GM12878 (cell line): ENCODE measurements at regions of chr11 and their contacts with region 1.

Region 1: DNA sequence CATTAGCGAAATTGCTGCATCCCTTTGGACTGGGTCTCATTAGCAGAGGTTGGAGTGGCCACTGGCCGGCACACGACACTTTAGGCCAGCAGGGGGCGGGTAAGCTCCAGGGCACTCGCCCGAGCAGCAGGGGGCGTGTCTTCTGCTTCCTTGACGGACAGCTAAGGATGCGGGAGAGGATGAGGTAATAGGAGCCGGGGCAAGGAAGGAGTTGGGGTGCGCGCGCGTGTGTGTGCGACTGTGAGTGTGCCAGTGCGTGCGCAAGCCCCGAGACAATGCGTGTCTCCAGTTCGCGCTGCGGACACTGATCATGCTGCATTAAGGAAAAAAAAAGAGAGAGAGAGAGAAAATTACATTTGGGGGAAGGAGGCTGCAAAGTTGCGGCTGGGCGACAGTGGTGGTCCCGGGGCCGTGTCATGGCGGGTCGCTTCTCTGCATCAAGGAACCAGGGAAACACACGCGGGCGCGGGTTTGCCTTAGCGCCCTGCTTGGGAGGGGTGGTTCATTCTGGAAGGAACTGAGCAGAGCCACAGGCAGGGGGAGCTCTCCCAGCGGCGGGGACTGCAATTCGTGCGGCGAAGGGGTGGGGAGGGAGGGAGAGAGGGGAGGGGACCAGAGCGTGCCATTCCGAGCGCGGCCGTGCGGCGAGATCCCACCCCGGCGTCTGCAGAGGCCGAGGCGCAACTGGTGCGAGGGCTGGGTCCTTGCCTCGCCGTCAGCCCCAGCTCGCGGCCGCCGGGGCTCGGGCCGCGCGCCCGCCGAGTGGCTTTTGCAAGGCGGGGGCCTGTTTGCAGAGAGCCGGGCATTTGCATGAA is at the start of gene DTX4:
- DNase-seq: peak; percentile 57
- ATAC-seq: peak; percentile 76
- H3K4me3 ChIP-seq: peak within 1 kb of the TSS; percentile 93
- H3K27ac ChIP-seq: peak within 1 kb of the TSS; percentile 84
- H3K4me1 ChIP-seq: peaks cover 6% of the 10 kb centered on the region
- H3K27me3 ChIP-seq: no peaks in the 10 kb centered on the region
- CTCF ChIP-seq: peak; percentile 97 to 98 (median 97)
- EP300 ChIP-seq: no peak
- POLR2A ChIP-seq: 0 out of 2 replicates have a peak, but pooled peaks have one; percentile 69
- RAD21 ChIP-seq: peak; percentile 92
- polyA plus RNA-seq, gene DTX4: 5.9 to 6.9 TPM

Region 2: DNA sequence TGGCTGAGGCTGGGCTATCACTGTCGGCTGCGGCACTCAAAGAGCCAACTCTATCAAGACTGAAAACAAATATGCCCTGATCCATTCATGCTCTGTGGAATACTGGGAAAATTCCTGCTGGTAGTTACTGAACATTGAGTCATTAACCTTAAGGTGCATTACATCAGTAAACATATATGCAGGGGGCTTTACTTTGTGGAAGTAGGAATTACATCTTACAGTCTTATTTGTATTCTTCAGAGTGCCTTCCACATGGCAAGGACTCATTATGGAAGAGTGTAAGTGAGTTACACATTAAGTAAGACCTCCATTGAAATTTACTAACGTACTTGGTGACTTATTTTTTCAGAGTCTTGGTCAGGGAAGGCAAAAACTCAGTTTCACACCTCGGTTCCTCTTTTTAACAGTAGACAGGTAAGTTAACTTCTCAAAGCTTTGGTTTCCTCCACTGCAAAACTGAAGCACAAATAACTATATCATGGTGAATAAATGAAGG is 668.3 kb before region 1 on chr11:
- CTCF ChIA-PET with region 1: no interaction called
- POLR2A ChIA-PET with region 1: no interaction called
- RAD21 ChIA-PET with region 1: no interaction called
- SMC1A ChIA-PET with region 1: no interaction called
- in situ Hi-C with region 1: no loop called
- intact Hi-C with region 1: no loop called
- DNase-seq: peak; percentile 51
- ATAC-seq: peak; percentile 91
- H3K4me3 ChIP-seq: no peak overlapping the region
- H3K27ac ChIP-seq: no peak overlapping the region
- H3K4me1 ChIP-seq: peaks cover 6% of the 10 kb centered on the region; the same call in 1 of the 2 replicates
- H3K27me3 ChIP-seq: no peaks in the 10 kb centered on the region
- CTCF ChIP-seq: no peak
- EP300 ChIP-seq: peak in 1 of 2 experiments; percentile 84; a peak in 2 of 4 replicates
- POLR2A ChIP-seq: no peak
- RAD21 ChIP-seq: no peak

Region 3: GRCh38 chr11:59152312-59152951 is 19.3 kb before region 1 on chr11:
- CTCF ChIA-PET with region 1: interaction called, 59 read pairs
- POLR2A ChIA-PET with region 1: no interaction called
- RAD21 ChIA-PET with region 1: interaction called, 4 read pairs
- SMC1A ChIA-PET with region 1: interaction called, 8 read pairs
- in situ Hi-C with region 1: no loop called
- intact Hi-C with region 1: no loop called
- DNase-seq: no peak
- ATAC-seq: peak; percentile 91
- H3K4me3 ChIP-seq: peak overlapping the region; percentile 44; the same call in 1 of the 2 replicates
- H3K27ac ChIP-seq: peak overlapping the region; percentile 83
- H3K4me1 ChIP-seq: peaks cover 28% of the 10 kb centered on the region
- H3K27me3 ChIP-seq: no peaks in the 10 kb centered on the region
- CTCF ChIP-seq: no peak
- EP300 ChIP-seq: peak in 1 of 2 experiments; percentile 68; a peak in 1 of 4 replicates
- POLR2A ChIP-seq: 0 out of 2 replicates have a peak, but pooled peaks have one; percentile 6
- RAD21 ChIP-seq: no peak

Region 4: DNA sequence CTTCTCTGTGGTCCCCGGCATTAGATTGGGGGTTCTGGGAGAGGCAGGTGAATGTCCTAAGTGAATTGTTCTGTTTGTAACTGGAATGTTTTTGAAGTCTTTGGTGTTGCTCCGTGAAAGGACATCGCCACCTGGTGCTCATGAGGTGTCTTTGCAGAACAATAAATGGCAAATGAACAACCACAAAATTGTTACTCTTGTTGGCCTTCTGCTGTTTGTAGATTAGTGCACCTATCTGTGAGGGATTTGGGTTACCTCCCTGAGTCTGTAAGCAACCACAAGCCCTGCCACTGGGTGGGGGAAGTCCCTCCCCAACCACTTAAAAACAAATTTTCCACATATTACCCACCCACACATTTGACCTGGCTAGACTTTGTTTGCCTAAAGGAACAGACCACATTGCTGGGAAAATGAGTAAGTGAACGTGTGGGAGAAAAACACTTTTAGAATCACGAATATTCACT is 36.3 kb after region 1 on chr11:
- CTCF ChIA-PET with region 1: interaction called, 1,180 read pairs
- POLR2A ChIA-PET with region 1: interaction called, 19 read pairs
- RAD21 ChIA-PET with region 1: interaction called, 183 read pairs
- SMC1A ChIA-PET with region 1: interaction called, 155 read pairs
- in situ Hi-C with region 1: loop called (anchors 5 kb)
- intact Hi-C with region 1: loop called (anchors 1 kb)
- DNase-seq: peak; percentile 89
- ATAC-seq: peak; percentile 77
- H3K4me3 ChIP-seq: peak overlapping the region; percentile 64
- H3K27ac ChIP-seq: peak overlapping the region; percentile 76
- H3K4me1 ChIP-seq: peaks cover 51% of the 10 kb centered on the region
- H3K27me3 ChIP-seq: no peaks in the 10 kb centered on the region
- CTCF ChIP-seq: peak; percentile 74 to 87 (median 78); a peak in 5 of 6 replicates
- EP300 ChIP-seq: peak; percentile 62 to 68; a peak in 3 of 4 replicates
- POLR2A ChIP-seq: no peak
- RAD21 ChIP-seq: peak; percentile 77

Region 5: GRCh38 chr11:59263225-59263894 is 91.6 kb after region 1 on chr11:
- CTCF ChIA-PET with region 1: interaction called, 14 read pairs
- POLR2A ChIA-PET with region 1: no interaction called
- RAD21 ChIA-PET with region 1: interaction called, 7 read pairs
- SMC1A ChIA-PET with region 1: interaction called, 5 read pairs
- in situ Hi-C with region 1: no loop called
- intact Hi-C with region 1: no loop called
- DNase-seq: no peak
- ATAC-seq: peak; percentile 53
- H3K4me3 ChIP-seq: no peak overlapping the region
- H3K27ac ChIP-seq: no peak overlapping the region
- H3K4me1 ChIP-seq: peaks cover 30% of the 10 kb centered on the region
- H3K27me3 ChIP-seq: no peaks in the 10 kb centered on the region
- CTCF ChIP-seq: peak; percentile 56 to 71 (median 58)
- EP300 ChIP-seq: no peak
- POLR2A ChIP-seq: no peak
- RAD21 ChIP-seq: peak; percentile 82

Region 6: DNA sequence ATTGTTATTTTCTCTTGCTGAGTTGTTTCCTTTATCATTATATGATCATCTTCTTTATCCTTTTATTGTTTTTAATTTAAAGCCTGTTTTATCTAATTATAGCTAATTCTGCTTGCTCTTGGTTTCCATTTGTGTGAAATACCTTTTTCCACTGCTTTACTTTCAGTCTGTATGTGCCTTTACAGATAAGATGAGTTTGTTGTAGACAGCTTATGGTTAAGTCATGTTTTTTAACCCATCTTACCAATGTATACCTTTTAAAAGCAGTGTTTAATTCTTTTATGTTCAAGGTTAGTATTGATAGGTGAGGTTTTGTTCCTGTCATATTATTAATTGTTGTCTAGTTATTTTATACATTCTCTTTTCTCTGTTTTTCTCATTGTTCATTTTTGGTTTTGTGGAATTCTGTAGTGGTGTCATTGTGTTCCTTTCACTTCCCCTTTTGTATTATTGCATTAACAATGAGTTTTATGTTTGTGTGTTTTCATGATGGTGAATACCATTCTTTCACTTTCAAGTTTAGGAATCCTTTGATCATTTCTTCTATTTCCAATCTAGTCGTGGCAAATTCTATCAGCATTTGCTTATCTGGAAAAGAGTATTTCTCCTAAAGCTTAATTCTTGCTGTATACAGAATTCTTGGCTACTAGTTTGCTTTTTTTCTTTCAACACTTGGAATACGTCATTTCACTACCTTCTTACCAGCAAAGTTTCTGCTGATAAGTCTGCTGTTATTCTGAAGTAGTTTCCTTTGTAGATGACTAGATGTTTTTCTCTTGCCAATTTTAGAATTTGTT is 208.7 kb after region 1 on chr11:
- CTCF ChIA-PET with region 1: no interaction called
- POLR2A ChIA-PET with region 1: no interaction called
- RAD21 ChIA-PET with region 1: no interaction called
- SMC1A ChIA-PET with region 1: no interaction called
- in situ Hi-C with region 1: no loop called
- intact Hi-C with region 1: loop called (anchors 5 kb)
- DNase-seq: peak; percentile 60
- ATAC-seq: peak; percentile 96
- H3K4me3 ChIP-seq: peak overlapping the region; percentile 43; the same call in 1 of the 2 replicates
- H3K27ac ChIP-seq: peak overlapping the region; percentile 67
- H3K4me1 ChIP-seq: peaks cover 5% of the 10 kb centered on the region
- H3K27me3 ChIP-seq: no peaks in the 10 kb centered on the region
- CTCF ChIP-seq: no peak
- EP300 ChIP-seq: peak; percentile 79 to 93
- POLR2A ChIP-seq: no peak
- RAD21 ChIP-seq: no peak